Activated CD4-positive, alpha-beta T cell treated with anti-CD3 and anti-CD28 coated beads for 36 hours (primary cell): ENCODE measurements at regions of chr1 and their contacts with region 1.

Region 1: GRCh38 chr1:150567717-150568593 is 11.5 kb downstream of the MCL1 start:
- DNase-seq: peak; percentile 76
- ATAC-seq: peak; percentile 24
- H3K4me3 Mint-ChIP-seq: peak overlapping the region; percentile 73
- H3K27ac Mint-ChIP-seq: peak overlapping the region; percentile 99
- H3K4me1 Mint-ChIP-seq: peaks cover 95% of the 10 kb centered on the region
- H3K27me3 Mint-ChIP-seq: no peaks in the 10 kb centered on the region

Region 2: GRCh38 chr1:150613061-150613920 is 45.3 kb after region 1 on chr1:
- CTCF ChIA-PET with region 1: interaction called, 461 read pairs
- POLR2A ChIA-PET with region 1: interaction called, 22 read pairs
- intact Hi-C with region 1: loop called (anchors 1 kb)
- DNase-seq: peak; percentile 78
- ATAC-seq: peak; percentile 63
- H3K4me3 Mint-ChIP-seq: peak overlapping the region; percentile 60
- H3K27ac Mint-ChIP-seq: peak overlapping the region; percentile 90
- H3K4me1 Mint-ChIP-seq: peaks cover 67% of the 10 kb centered on the region
- H3K27me3 Mint-ChIP-seq: no peaks in the 10 kb centered on the region

Region 3: GRCh38 chr1:150650199-150650598 is 82.2 kb after region 1 on chr1:
- CTCF ChIA-PET with region 1: no interaction called
- POLR2A ChIA-PET with region 1: no interaction called
- intact Hi-C with region 1: no loop called
- DNase-seq: no peak
- ATAC-seq: no peak
- H3K4me3 Mint-ChIP-seq: no peak overlapping the region
- H3K27ac Mint-ChIP-seq: no peak overlapping the region
- H3K4me1 Mint-ChIP-seq: peaks cover 3% of the 10 kb centered on the region
- H3K27me3 Mint-ChIP-seq: no peaks in the 10 kb centered on the region

Region 4: DNA sequence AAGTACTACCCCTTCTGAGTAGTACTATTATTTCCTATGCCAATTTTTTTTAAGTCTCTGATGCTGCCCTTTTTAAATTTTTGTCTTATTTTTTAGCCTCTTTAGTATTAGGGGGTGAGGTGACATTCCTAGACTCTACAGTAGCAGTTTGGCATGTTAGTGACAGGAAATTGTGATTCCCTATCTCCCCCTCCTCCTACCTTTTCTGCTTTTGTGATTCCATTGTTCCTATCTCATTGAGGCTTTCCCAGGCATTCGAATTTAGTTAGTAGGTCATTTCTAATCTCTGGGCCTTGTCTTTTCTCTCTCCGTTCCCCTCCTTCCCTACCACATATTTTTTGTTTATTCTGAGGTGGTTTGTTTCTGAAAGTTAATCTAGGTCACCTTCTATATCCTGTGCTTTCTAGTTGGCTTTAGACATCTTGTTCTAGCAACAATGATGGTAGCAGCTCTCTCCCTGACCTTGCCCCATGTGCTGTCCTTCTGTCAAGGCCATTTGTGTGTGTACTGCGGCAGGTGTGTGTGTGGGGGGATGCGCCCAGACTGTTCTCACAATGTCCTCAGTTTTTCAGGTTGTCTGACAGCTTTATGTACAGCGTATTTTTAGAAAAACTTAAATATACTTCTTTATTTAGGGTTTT is 556.9 kb after region 1 on chr1:
- CTCF ChIA-PET with region 1: no interaction called
- POLR2A ChIA-PET with region 1: no interaction called
- intact Hi-C with region 1: no loop called
- DNase-seq: no peak
- ATAC-seq: no peak
- H3K4me3 Mint-ChIP-seq: no peak overlapping the region
- H3K27ac Mint-ChIP-seq: no peak overlapping the region
- H3K4me1 Mint-ChIP-seq: peaks cover 2% of the 10 kb centered on the region
- H3K27me3 Mint-ChIP-seq: no peaks in the 10 kb centered on the region